Transverse colon (tissue), 4 donors: ENCODE measurements at regions of chr3 and their contacts with region 1.

Region 1: DNA sequence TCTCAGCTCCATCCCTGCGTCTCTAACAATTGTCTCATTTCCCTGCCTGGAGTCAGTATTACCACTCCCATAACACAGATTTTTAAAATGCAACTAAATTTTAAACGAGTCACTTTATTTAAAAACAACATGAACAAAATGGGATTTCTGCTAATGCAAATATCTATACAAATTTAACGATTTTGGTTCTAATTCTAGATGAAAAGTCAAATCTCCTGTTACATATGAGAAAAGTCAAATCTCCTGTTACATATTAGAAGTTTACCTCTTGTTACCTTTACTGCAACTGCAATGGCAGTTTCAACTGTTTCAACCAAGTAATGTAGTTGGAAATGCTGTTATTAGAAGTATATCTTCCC is 578 bp upstream of the RPL39L start:
- DNase-seq: no peak
- H3K4me3 ChIP-seq: peak overlapping the region in 3 of 4 donors; percentile 33 to 59 (median 40)
- H3K27ac ChIP-seq: peak overlapping the region in 3 of 4 donors; percentile 66 to 76 (median 69)
- H3K4me1 ChIP-seq: peaks cover 0 to 9% (median 6%) of the 10 kb centered on the region in 4 donors
- H3K27me3 ChIP-seq: no peaks in the 10 kb centered on the region
- CTCF ChIP-seq: peak in 2 of 5 experiments; percentile 1 to 23
- EP300 ChIP-seq: no peak
- POLR2A ChIP-seq: no peak

Region 2: GRCh38 chr3:185605566-185605965 is 1534.3 kb before region 1 on chr3:
- in situ Hi-C with region 1: no loop called
- intact Hi-C with region 1: loop called (anchors 10 kb)
- DNase-seq: no peak
- H3K4me3 ChIP-seq: no peak overlapping the region
- H3K27ac ChIP-seq: no peak overlapping the region
- H3K4me1 ChIP-seq: no peaks in the 10 kb centered on the region
- H3K27me3 ChIP-seq: no peaks in the 10 kb centered on the region
- CTCF ChIP-seq: no peak
- EP300 ChIP-seq: no peak
- POLR2A ChIP-seq: no peak

Region 3: GRCh38 chr3:186464424-186465093 is 675.3 kb before region 1 on chr3:
- in situ Hi-C with region 1: no loop called
- intact Hi-C with region 1: no loop called
- DNase-seq: no peak
- H3K4me3 ChIP-seq: no peak overlapping the region
- H3K27ac ChIP-seq: no peak overlapping the region
- H3K4me1 ChIP-seq: no peaks in the 10 kb centered on the region
- H3K27me3 ChIP-seq: peaks cover 4% of the 10 kb centered on the region
- CTCF ChIP-seq: no peak
- EP300 ChIP-seq: no peak
- POLR2A ChIP-seq: no peak

Region 4: GRCh38 chr3:187264021-187264420 is 124.1 kb after region 1 on chr3:
- in situ Hi-C with region 1: no loop called
- intact Hi-C with region 1: no loop called
- DNase-seq: no peak
- H3K4me3 ChIP-seq: no peak overlapping the region
- H3K27ac ChIP-seq: peak overlapping the region; percentile 50 to 60 (median 56)
- H3K4me1 ChIP-seq: peaks cover 6 to 26% (median 12%) of the 10 kb centered on the region in 4 donors
- H3K27me3 ChIP-seq: no peaks in the 10 kb centered on the region
- CTCF ChIP-seq: no peak
- EP300 ChIP-seq: no peak
- POLR2A ChIP-seq: no peak